Aorta (tissue), 5 donors: ENCODE measurements at regions of chr12 and their contacts with region 1.

Region 1: GRCh38 chr12:8949342-8950220 is at the start of gene M6PR:
- DNase-seq: peak; percentile 96 to 97
- ATAC-seq: peak; percentile 97
- H3K4me3 ChIP-seq: peak within 1 kb of the TSS; percentile 96 to 97
- H3K27ac ChIP-seq: peak within 1 kb of the TSS; percentile 52 to 98
- H3K4me1 ChIP-seq: peaks cover 0 to 4% of the 10 kb centered on the region in 2 donors
- H3K27me3 ChIP-seq: no peaks in the 10 kb centered on the region
- total RNA-seq, gene M6PR: 82.9 to 105 TPM

Region 2: DNA sequence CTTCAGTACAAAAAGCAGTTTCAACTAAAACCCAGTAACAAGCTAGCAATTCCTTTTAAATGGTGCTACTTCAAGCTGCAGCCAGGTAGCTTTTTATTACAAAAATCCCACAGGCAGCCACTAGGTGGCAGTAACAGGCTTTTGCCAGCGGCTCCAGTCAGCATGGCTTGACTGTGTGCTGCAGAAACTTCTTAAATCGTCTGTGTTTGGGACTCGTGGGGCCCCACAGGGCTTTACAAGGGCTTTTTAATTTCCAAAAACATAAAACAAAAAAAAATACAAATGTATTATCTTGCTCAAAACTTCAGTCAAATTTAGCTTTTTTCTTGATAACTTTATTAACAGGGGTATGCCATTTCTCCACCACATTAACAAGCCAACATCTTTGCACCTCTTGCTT is 405.3 kb before region 1 on chr12:
- intact Hi-C with region 1: no loop called
- DNase-seq: peak; percentile 71 to 79
- ATAC-seq: peak; percentile 81
- H3K4me3 ChIP-seq: no peak overlapping the region
- H3K27ac ChIP-seq: no peak overlapping the region
- H3K4me1 ChIP-seq: no peaks in the 10 kb centered on the region
- H3K27me3 ChIP-seq: no peaks in the 10 kb centered on the region

Region 3: GRCh38 chr12:8629486-8630033 is 320.0 kb before region 1 on chr12:
- intact Hi-C with region 1: no loop called
- DNase-seq: peak in 1 of 2 donors; percentile 58
- ATAC-seq: peak; percentile 65
- H3K4me3 ChIP-seq: no peak overlapping the region
- H3K27ac ChIP-seq: no peak overlapping the region
- H3K4me1 ChIP-seq: no peaks in the 10 kb centered on the region
- H3K27me3 ChIP-seq: no peaks in the 10 kb centered on the region

Region 4: DNA sequence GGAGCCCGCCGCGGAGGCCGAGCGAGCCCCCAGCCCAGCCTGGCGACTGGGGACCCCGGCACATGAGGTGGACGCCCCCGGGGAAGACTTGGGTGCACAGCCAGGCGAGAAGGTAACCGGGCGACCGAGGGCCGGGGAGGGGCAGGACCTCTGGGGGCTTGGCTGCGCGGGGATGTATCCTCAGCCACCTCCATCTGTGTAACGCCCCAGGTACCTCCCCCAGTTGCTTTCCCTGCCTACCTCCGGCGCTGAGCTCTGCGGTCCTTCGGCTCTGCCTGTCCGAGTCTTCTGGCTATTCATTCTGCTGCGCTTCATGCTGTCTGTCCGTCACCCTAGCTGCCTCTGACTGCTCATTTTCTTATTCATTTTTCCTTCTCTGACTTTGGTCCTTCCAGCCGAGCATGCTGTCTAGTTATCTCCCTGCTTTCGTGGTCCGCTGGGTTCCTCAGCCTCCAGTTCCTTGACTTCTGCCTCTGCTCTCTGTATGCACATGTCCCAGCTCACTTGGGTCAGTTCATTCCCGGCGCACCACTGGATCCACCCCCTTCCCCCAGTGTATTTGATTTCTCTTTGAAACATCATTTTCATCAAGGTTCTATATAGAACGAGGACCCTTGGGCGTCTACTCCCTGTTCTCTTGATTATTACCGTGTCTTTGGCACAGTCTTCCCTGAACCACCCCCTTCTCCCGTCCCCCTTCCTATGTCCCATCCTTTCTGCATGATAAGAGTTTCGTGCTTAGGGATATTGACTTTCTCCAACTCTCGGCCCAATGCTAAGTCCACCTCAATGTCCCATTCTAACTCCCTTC is 34.7 kb before region 1 on chr12:
- intact Hi-C with region 1: loop called (anchors 1 to 5 kb)
- DNase-seq: peak; percentile 63 to 80
- ATAC-seq: peak; percentile 64
- H3K4me3 ChIP-seq: peak overlapping the region; percentile 87 to 91
- H3K27ac ChIP-seq: peak overlapping the region in 1 of 2 donors; percentile 28
- H3K4me1 ChIP-seq: peaks cover 0 to 6% of the 10 kb centered on the region in 2 donors
- H3K27me3 ChIP-seq: no peaks in the 10 kb centered on the region

Region 5: GRCh38 chr12:9039397-9039977 is 89.9 kb after region 1 on chr12:
- intact Hi-C with region 1: loop called in 1 of 2 experiments (anchors 5 kb)
- DNase-seq: no peak
- ATAC-seq: peak; percentile 79
- H3K4me3 ChIP-seq: no peak overlapping the region
- H3K27ac ChIP-seq: no peak overlapping the region
- H3K4me1 ChIP-seq: no peaks in the 10 kb centered on the region
- H3K27me3 ChIP-seq: no peaks in the 10 kb centered on the region

Region 6: DNA sequence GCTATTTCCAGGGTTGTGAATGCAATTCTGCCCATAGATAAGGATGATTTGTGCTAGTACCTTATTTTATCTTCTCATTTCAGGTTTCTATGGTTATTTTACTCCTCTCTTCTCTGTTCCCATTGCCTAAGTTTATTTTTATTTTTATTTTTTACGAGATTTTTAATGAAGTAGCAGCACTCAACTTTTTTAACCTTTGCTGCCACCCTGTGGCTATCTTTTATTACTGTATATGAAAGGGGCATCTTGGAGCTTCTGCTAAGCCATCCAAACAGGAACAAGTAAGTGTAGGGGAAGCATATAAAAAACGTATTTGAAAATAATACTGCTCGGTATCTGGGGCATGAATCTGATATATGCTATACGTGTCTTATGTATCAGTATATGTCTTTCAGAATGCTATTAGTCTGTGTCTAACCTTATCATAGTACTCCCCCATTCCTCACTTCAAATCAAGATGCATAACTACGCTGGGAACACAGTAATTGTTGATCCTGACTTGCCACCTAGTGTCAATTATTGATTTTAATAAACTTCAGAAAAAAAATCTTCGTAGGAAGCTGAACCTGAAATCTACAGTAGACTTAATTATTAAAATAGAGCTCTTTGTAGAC is 100.0 kb after region 1 on chr12:
- intact Hi-C with region 1: loop called (anchors 5 kb)
- DNase-seq: no peak
- ATAC-seq: peak; percentile 57
- H3K4me3 ChIP-seq: no peak overlapping the region
- H3K27ac ChIP-seq: no peak overlapping the region
- H3K4me1 ChIP-seq: no peaks in the 10 kb centered on the region
- H3K27me3 ChIP-seq: no peaks in the 10 kb centered on the region

Region 7: DNA sequence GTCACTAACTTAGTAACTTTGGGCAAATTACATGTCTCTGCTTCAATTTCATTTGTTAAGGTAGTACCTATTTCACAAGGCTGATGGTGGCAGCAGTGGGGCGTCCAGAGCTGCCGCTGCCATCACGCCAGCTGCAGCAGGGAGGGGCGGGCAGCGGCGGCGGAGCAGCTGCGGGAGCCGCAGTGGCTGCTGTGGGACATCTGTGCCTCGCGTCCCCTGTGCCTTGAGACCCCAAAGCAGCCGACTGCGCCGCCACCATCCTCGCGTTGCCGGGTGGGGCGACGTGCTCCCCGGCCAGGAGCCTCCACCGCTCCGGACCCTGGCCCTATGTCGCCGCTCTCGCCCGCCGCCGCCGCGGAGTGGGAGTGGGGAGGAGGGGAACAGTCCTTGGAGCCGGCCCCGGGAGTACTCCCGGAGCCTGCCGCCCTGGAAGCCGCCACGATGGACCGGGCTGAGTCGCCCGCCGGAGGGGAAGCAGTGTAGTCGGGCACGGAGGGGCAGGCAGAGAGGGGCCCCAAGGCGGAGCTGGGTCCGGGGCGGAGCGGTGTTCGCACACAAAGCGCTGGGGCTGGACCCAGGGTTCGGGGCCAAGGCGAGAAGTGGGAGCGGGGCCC is 114.7 kb after region 1 on chr12:
- intact Hi-C with region 1: no loop called
- DNase-seq: peak; percentile 76 to 86
- ATAC-seq: peak; percentile 90
- H3K4me3 ChIP-seq: peak overlapping the region; percentile 19 to 95
- H3K27ac ChIP-seq: peak overlapping the region; percentile 75 to 94
- H3K4me1 ChIP-seq: no peaks in the 10 kb centered on the region
- H3K27me3 ChIP-seq: no peaks in the 10 kb centered on the region